Cardiac septum (tissue), 1 donor: ENCODE measurements at regions of chr22 and their contacts with region 1.

Region 1: GRCh38 chr22:31970490-31971444 is 26.4 kb downstream of the YWHAH start:
- DNase-seq: peak; percentile 96

Region 2: GRCh38 chr22:31995046-31995445 is 24.3 kb after region 1 on chr22:
- intact Hi-C with region 1: no loop called
- DNase-seq: no peak

Region 3: GRCh38 chr22:32265882-32266767 is 295.4 kb after region 1 on chr22:
- intact Hi-C with region 1: loop called (anchors 5 kb)
- DNase-seq: no peak

Region 4: GRCh38 chr22:32474635-32475467 is 504.1 kb after region 1 on chr22 and contains the start of gene FBXO7:
- intact Hi-C with region 1: loop called (anchors 5 kb)
- DNase-seq: peak; percentile 94
- total RNA-seq, gene FBXO7: 44.8 TPM